ENCODE measurements at regions of chr11 and their contacts with region 1.

Region 1: GRCh38 chr11:1574238-1574932 is 2.3 kb upstream of the DUSP8 start:
- DNase-seq: peak in 1 of 2 experiments; percentile 42
- H3K4me3 ChIP-seq: peak overlapping the region; percentile 52; the same call in 1 of the 2 replicates
- H3K27ac ChIP-seq: no peak overlapping the region
- H3K4me1 ChIP-seq: no peaks in the 10 kb centered on the region; the same call in 1 of the 2 replicates
- H3K27me3 ChIP-seq: peaks cover 14% of the 10 kb centered on the region
- CTCF ChIP-seq: peak; percentile 46

Region 2: GRCh38 chr11:1546536-1547400 is 27.6 kb before region 1 on chr11:
- CTCF ChIA-PET with region 1: interaction called, 31 read pairs
- POLR2A ChIA-PET with region 1: interaction called, 6 read pairs
- intact Hi-C with region 1: loop called (anchors 2 kb)
- DNase-seq: peak in 1 of 2 experiments; percentile 71
- H3K4me3 ChIP-seq: peak overlapping the region; percentile 50; the same call in 1 of the 2 replicates
- H3K27ac ChIP-seq: no peak overlapping the region
- H3K4me1 ChIP-seq: no peaks in the 10 kb centered on the region; the same call in none of the 2 replicates
- H3K27me3 ChIP-seq: peaks cover 8% of the 10 kb centered on the region; the same call in 1 of the 2 replicates
- CTCF ChIP-seq: peak; percentile 73

Region 3: GRCh38 chr11:1553808-1554594 is 20.4 kb before region 1 on chr11:
- CTCF ChIA-PET with region 1: interaction called, 5 read pairs
- POLR2A ChIA-PET with region 1: no interaction called
- intact Hi-C with region 1: loop called (anchors 2 kb)
- DNase-seq: peak; percentile 69 to 75
- H3K4me3 ChIP-seq: peak overlapping the region; percentile 38; the same call in 1 of the 2 replicates
- H3K27ac ChIP-seq: no peak overlapping the region
- H3K4me1 ChIP-seq: peaks cover 23% of the 10 kb centered on the region
- H3K27me3 ChIP-seq: no peaks in the 10 kb centered on the region
- CTCF ChIP-seq: peak; percentile 37; the same call in 1 of the 2 replicates

Region 4: GRCh38 chr11:1619449-1619848 is 45.1 kb after region 1 on chr11:
- CTCF ChIA-PET with region 1: interaction called, 25 read pairs
- POLR2A ChIA-PET with region 1: no interaction called
- intact Hi-C with region 1: no loop called
- DNase-seq: no peak
- H3K4me3 ChIP-seq: no peak overlapping the region
- H3K27ac ChIP-seq: no peak overlapping the region
- H3K4me1 ChIP-seq: no peaks in the 10 kb centered on the region
- H3K27me3 ChIP-seq: peaks cover 64% of the 10 kb centered on the region
- CTCF ChIP-seq: no peak

Region 5: DNA sequence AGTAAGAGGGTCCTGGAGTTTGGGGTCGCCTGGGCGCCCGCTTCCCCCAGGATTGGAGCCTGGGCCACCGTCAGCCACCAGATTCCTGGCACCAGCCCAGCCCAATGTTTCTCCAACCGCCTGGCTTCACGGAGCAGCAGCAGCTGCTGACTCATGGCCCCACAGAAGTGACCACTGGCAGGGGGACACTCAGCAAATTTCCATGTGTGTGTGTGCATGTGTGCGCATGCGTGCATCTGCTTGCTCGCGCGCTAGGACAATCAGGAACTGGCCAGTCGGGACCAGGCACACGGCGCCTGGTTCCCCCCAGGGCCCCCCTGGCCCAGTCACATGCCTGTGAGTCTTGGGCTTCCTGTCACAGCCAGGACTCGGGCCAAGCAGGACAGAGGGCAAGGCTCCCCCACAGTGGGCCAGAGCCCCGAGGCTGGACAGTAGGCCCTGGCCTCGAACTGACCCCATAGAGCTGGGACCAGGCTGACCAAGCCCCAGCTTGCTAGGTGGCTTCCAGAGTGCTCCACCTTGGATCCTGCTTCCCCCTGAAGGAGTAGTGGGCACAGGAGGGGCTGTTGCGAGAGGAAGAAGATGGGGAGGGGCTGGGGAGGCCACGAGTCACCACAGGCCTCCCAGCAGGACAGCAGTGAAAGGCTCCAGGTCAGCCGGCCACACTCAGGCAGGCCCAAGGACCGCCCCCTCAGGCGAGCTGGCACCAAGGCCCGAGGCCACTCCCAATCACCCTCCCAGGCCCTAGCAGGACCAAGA is 186.1 kb after region 1 on chr11:
- CTCF ChIA-PET with region 1: no interaction called
- POLR2A ChIA-PET with region 1: no interaction called
- intact Hi-C with region 1: no loop called
- DNase-seq: peak; percentile 70 to 87
- H3K4me3 ChIP-seq: peak overlapping the region; percentile 18; the same call in 1 of the 2 replicates
- H3K27ac ChIP-seq: peak overlapping the region; percentile 50
- H3K4me1 ChIP-seq: peaks cover 26% of the 10 kb centered on the region
- H3K27me3 ChIP-seq: no peaks in the 10 kb centered on the region
- CTCF ChIP-seq: no peak

Region 6: GRCh38 chr11:1782831-1783724 is 208.7 kb after region 1 on chr11:
- CTCF ChIA-PET with region 1: no interaction called
- POLR2A ChIA-PET with region 1: interaction called, 11 read pairs
- intact Hi-C with region 1: no loop called
- DNase-seq: peak in 1 of 2 experiments; percentile 62
- H3K4me3 ChIP-seq: peak overlapping the region; percentile 24; the same call in 1 of the 2 replicates
- H3K27ac ChIP-seq: peak overlapping the region; percentile 54
- H3K4me1 ChIP-seq: peaks cover 35% of the 10 kb centered on the region
- H3K27me3 ChIP-seq: no peaks in the 10 kb centered on the region
- CTCF ChIP-seq: no peak